AG04450 (cell line): ENCODE measurements at regions of chr2 and their contacts with region 1.

Region 1: DNA sequence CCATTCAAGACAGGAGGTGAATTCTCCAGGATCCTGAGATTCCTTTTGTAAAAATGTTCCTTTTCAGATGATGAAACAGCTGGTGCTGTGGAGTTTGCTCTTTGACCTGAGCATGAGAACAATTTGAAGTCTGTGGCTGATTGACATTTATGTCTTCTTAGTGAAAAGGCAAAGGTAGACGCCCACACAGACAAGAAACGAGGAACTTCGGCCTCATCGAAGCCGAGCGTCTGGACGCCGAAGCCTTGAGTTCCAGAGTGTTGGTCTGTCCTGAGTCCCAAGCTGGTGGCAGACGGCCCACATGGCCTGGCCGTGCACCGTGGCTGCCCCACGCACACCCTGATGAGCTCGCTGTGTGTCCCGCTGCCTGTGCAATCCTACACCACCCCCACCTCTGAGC is 20.7 kb upstream of the SNTG2 start:
- DNase-seq: no peak
- H3K4me3 ChIP-seq: no peak overlapping the region
- H3K27ac ChIP-seq: no peak overlapping the region
- H3K27me3 ChIP-seq: no peaks in the 10 kb centered on the region
- CTCF ChIP-seq: no peak

Region 2: GRCh38 chr2:807300-807699 is 122.6 kb before region 1 on chr2:
- CTCF ChIA-PET with region 1: no interaction called
- POLR2A ChIA-PET with region 1: no interaction called
- DNase-seq: no peak
- H3K4me3 ChIP-seq: no peak overlapping the region
- H3K27ac ChIP-seq: no peak overlapping the region
- H3K27me3 ChIP-seq: no peaks in the 10 kb centered on the region
- CTCF ChIP-seq: no peak

Region 3: DNA sequence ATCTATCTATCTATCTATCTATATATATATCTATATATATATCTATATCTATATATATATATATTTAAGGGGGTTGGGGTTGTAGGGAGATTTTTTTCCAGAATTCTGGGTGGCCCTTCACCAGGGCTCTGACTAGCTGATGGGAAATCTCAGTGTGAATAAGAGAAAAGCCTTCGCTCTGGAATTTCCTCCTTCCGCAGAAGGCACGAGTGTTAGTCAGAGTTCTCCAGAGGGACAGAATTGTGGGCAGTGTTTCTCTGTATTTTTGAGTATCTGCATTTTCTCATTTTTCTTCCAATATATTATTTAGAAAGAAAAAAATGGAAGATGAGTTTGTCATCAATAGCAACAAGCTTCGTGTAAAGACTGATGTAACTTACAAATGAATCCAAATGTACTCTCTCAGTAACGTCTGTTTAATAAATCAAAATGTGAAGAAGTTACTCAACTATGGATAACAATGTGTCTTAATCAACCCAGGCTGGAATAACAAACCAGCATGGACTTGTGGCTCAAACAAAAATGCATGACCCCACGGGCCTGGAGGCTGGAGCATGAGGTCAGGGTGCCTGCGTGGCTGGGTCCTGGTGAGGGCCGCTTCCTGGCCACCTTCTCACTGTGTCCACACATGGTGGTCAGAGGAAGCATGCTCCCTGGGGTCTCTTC is 10.1 kb after region 1 on chr2:
- CTCF ChIA-PET with region 1: no interaction called
- POLR2A ChIA-PET with region 1: no interaction called
- DNase-seq: no peak
- H3K4me3 ChIP-seq: no peak overlapping the region
- H3K27ac ChIP-seq: no peak overlapping the region
- H3K27me3 ChIP-seq: no peaks in the 10 kb centered on the region
- CTCF ChIP-seq: no peak

Region 4: DNA sequence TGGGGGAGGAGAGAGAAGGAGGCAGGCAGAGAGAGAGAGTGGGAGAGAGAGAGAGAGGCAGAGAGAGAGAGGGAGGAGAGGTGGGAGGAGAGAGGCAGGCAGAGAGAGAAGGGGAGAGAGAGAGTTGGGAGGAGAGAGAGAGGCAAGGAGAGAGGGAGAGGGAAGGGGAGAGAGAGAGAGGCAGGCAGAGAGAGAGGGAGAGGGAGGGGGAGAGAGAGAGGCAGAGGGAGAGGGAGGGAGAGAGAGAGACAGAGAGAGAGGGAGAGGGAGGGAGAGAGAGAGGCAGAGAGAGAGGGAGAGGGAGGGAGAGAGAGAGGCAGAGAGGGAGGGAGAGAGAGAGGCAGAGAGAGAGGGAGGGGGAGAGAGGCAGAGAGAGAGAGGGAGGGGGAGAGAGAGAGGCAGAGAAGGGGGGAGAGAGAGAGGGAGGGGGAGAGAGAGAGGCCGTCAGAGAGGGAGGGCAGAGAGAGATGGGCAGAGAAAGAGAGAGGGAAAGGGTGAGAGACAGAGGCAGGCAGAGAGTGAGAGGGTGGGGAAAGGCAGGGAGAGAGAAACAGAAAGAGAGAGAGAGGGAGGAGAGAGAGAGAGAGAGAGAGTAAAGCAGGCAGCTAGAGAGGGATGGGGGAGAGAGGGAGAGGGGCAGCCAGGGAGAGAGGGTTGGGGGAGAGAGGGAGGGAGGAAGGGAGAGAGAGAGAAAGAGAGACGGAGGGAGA is 936.6 kb after region 1 on chr2:
- CTCF ChIA-PET with region 1: interaction called, 13 read pairs
- POLR2A ChIA-PET with region 1: no interaction called
- DNase-seq: no peak
- H3K4me3 ChIP-seq: no peak overlapping the region
- H3K27ac ChIP-seq: no peak overlapping the region
- H3K27me3 ChIP-seq: peaks cover 22% of the 10 kb centered on the region
- CTCF ChIP-seq: no peak